ENCODE measurements at regions of chr15 and their contacts with region 1.

Region 1: GRCh38 chr15:90994417-90995311 is at the start of gene PRC1:
- DNase-seq: peak; percentile 92 to 99 (median 97)
- ATAC-seq: peak; percentile 96
- H3K4me3 ChIP-seq: peak within 1 kb of the TSS; percentile 78 to 95
- H3K4me3 Mint-ChIP-seq: peak within 1 kb of the TSS; percentile 99
- H3K27ac ChIP-seq: peak within 1 kb of the TSS; percentile 81 to 94
- H3K27ac Mint-ChIP-seq: peak within 1 kb of the TSS; percentile 97
- H3K4me1 ChIP-seq: peaks cover 13% of the 10 kb centered on the region
- H3K4me1 Mint-ChIP-seq: peaks cover 19% of the 10 kb centered on the region
- H3K27me3 ChIP-seq: no peaks in the 10 kb centered on the region
- H3K27me3 Mint-ChIP-seq: no peaks in the 10 kb centered on the region
- CTCF ChIP-seq: no peak
- total RNA-seq, gene PRC1: 24.6 to 31.3 TPM

Region 2: GRCh38 chr15:91022075-91022835 is 27.6 kb after region 1 on chr15 and contains the start of gene VPS33B:
- CTCF ChIA-PET with region 1: no interaction called
- POLR2A ChIA-PET with region 1: no interaction called
- intact Hi-C with region 1: loop called (anchors 1 kb)
- DNase-seq: peak; percentile 42 to 92 (median 80)
- ATAC-seq: peak; percentile 89
- H3K4me3 ChIP-seq: peak within 1 kb of the TSS; percentile 85 to 97
- H3K4me3 Mint-ChIP-seq: peak within 1 kb of the TSS; percentile 90
- H3K27ac ChIP-seq: peak within 1 kb of the TSS; percentile 52 to 80
- H3K27ac Mint-ChIP-seq: peak within 1 kb of the TSS; percentile 89
- H3K4me1 ChIP-seq: peaks cover 11% of the 10 kb centered on the region
- H3K4me1 Mint-ChIP-seq: peaks cover 38% of the 10 kb centered on the region
- H3K27me3 ChIP-seq: no peaks in the 10 kb centered on the region
- H3K27me3 Mint-ChIP-seq: no peaks in the 10 kb centered on the region
- CTCF ChIP-seq: no peak
- total RNA-seq, gene VPS33B: 30.1 to 33.0 TPM

Region 3: DNA sequence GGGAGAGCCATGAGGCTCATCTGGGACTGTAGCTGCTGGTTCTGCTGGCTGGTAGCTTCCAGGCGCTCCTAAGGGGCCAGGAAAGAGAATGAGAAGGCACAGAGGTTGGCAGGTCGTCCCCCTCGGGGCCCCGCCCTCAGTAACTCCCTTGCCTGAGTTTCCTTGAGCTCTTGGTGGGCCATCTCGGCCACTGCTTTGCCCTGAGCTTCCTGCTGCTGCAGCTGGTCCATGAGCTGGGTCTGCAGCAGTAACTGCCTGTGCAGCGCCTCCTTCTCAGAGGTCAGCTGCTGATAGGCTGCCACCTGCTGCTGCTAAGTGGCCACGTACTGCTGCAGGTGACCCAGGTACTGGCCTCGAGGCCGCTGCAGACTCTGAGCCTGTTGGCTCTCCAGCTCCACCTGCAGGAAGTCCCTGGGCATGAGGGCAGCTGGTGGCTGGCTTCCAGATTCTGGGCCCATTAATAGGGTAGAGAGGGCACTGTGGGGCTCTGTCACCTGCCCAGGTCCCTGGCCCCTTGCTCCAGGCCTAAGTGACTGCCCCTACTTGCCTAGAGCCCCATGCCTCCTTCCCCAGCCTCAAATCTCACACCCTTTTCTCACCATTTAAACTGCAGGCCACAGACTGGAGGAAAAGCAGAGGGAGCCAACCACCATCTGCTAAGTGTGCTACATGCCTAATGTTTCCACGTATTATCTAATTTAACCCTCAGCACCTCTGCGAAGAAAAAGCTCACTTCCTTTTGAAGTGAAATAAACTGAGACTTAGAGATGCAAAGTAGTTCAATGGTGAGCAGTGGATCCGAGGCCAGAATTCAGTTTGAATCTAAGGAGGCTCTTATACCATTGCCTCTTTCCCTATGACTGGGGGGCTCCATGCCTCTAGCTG is 38.5 kb after region 1 on chr15:
- CTCF ChIA-PET with region 1: no interaction called
- POLR2A ChIA-PET with region 1: no interaction called
- intact Hi-C with region 1: no loop called
- DNase-seq: peak; percentile 25 to 69 (median 59)
- ATAC-seq: peak; percentile 80
- H3K4me3 ChIP-seq: no peak overlapping the region
- H3K4me3 Mint-ChIP-seq: no peak overlapping the region
- H3K27ac ChIP-seq: no peak overlapping the region
- H3K27ac Mint-ChIP-seq: no peak overlapping the region
- H3K4me1 ChIP-seq: no peaks in the 10 kb centered on the region
- H3K4me1 Mint-ChIP-seq: peaks cover 2% of the 10 kb centered on the region
- H3K27me3 ChIP-seq: no peaks in the 10 kb centered on the region
- H3K27me3 Mint-ChIP-seq: no peaks in the 10 kb centered on the region
- CTCF ChIP-seq: peak; percentile 59

Region 4: GRCh38 chr15:91055548-91056331 is 61.1 kb after region 1 on chr15:
- CTCF ChIA-PET with region 1: no interaction called
- POLR2A ChIA-PET with region 1: no interaction called
- intact Hi-C with region 1: no loop called
- DNase-seq: peak in 5 of 9 experiments; percentile 6 to 53 (median 30)
- ATAC-seq: no peak
- H3K4me3 ChIP-seq: no peak overlapping the region
- H3K4me3 Mint-ChIP-seq: no peak overlapping the region
- H3K27ac ChIP-seq: no peak overlapping the region
- H3K27ac Mint-ChIP-seq: no peak overlapping the region
- H3K4me1 ChIP-seq: no peaks in the 10 kb centered on the region
- H3K4me1 Mint-ChIP-seq: no peaks in the 10 kb centered on the region
- H3K27me3 ChIP-seq: peaks cover 0 to 2% of the 10 kb centered on the region in 2 experiments
- H3K27me3 Mint-ChIP-seq: peaks cover 57% of the 10 kb centered on the region
- CTCF ChIP-seq: peak; percentile 34

Region 5: DNA sequence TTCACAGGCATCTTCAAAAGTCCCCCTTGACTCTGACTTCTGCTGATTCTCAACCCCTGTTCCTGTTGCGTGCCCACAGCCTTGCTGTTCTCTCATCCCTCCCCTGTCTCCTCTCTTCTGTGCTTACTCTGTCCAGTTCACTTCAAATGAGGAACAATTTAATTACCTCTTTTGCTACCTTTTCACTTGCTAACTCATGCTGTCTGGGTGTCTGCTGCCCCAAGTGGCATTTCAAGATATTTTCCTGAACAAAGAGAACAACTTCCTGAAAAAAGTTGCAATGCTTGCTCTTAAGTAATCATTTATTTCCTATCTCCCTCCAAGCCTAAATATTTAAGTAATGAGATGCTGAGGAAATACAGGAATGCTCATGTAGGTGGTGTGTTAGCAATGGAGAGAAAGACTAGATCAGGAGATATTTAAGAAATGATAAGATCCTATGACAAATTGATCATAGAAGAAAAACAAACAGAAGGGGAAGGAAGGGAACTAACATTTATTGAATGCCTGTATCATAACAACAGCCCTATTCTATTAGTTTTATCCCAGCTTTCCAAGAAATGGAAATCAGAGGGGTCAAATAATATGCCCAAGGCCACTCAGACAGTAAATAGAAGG is 147.6 kb after region 1 on chr15:
- CTCF ChIA-PET with region 1: no interaction called
- POLR2A ChIA-PET with region 1: no interaction called
- intact Hi-C with region 1: no loop called
- DNase-seq: peak in 1 of 9 experiments; percentile 8
- ATAC-seq: no peak
- H3K4me3 ChIP-seq: no peak overlapping the region
- H3K4me3 Mint-ChIP-seq: no peak overlapping the region
- H3K27ac ChIP-seq: no peak overlapping the region
- H3K27ac Mint-ChIP-seq: no peak overlapping the region
- H3K4me1 ChIP-seq: no peaks in the 10 kb centered on the region
- H3K4me1 Mint-ChIP-seq: no peaks in the 10 kb centered on the region
- H3K27me3 ChIP-seq: no peaks in the 10 kb centered on the region
- H3K27me3 Mint-ChIP-seq: peaks cover 27% of the 10 kb centered on the region
- CTCF ChIP-seq: peak; percentile 30

Measured in CD8-positive, alpha-beta T cell (primary cell).